ENCODE measurements at regions of chr6 and their contacts with region 1.

Region 1: DNA sequence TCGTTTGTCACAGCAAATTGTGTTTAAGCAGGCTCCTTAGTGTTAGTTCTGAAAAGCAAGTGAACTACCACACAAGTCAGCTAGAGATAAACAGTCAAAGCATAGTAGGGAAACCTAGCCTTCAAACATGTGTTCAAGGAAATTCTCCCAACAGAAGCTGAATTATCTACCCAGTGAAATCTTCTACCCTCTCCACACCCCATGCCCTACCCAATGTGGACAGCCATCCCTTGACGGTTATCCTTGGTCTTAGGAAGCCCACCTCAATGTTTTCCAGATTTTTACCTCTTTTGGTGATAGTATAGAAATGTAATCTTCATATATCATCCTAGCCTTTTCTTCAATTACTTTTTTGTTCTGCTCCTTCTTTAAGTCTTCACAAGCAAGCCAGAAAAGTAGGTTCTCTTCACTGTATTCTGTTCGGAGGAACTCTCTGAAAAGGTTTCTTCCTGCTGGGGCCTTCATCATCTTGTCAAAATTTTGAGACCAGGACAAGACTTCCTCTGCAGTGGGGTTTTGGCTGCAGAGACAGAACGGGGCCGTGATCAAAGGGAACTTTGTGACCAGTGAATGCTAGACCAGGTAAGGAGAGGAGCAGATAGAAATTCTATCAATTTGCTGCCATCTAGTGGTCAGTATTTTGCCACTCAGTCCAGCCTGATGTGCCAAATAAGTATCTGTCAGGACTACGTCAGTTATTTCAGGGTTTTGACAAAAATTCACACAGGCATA is 21.6 kb upstream of the MTRF1L start:
- DNase-seq: peak in 1 of 2 donors; percentile 36
- ATAC-seq: peak in 7 of 8 donors; percentile 69 to 93 (median 74)
- H3K4me3 ChIP-seq: no peak overlapping the region
- H3K27ac ChIP-seq: no peak overlapping the region
- H3K4me1 ChIP-seq: no peaks in the 10 kb centered on the region
- H3K27me3 ChIP-seq: no peaks in the 10 kb centered on the region
- CTCF ChIP-seq: peak; percentile 66 to 89 (median 80)

Region 2: GRCh38 chr6:152301764-152302568 is 722.2 kb before region 1 on chr6:
- intact Hi-C with region 1: no loop called
- DNase-seq: peak; percentile 88
- ATAC-seq: peak; percentile 95 to 99 (median 97)
- H3K4me3 ChIP-seq: peak overlapping the region; percentile 23 to 74 (median 61)
- H3K27ac ChIP-seq: peak overlapping the region; percentile 62 to 93 (median 82)
- H3K4me1 ChIP-seq: peaks cover 0 to 55% (median 23%) of the 10 kb centered on the region in 9 donors
- H3K27me3 ChIP-seq: no peaks in the 10 kb centered on the region
- CTCF ChIP-seq: peak; percentile 38 to 77 (median 70)

Region 3: DNA sequence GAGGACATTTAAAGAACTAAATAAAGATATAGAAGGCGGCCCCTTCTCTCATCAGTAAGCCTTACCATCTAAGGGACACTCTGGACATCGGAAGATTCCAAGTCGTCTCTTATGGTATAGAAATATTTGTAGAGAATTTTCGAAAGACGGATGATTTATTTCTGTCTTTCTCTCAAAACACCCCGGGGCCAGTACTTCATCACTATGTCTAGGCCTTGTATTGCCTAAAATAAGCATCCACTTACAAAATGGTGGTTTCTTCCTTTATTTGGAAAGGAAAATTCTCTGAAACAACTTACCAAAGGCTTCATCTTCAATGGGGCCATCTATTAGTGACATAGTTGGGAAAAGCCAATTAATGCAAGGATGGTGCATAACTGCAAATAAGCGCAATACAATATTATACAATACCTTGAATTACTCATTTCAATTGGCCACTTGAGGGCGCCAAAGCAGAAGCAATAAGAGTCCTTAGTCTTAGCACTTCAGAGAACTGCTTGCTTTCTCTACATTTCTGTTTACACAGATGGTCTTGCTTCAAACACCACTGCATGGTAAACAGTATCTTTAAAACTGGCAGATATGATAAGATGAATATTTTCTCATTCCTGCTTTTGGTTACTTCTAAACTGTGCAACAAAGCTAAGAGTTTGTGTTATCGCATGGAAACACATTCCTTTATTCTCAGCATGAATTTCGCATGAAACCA is 160.4 kb before region 1 on chr6:
- intact Hi-C with region 1: loop called (anchors 1 to 10 kb)
- DNase-seq: peak in 1 of 2 donors; percentile 73
- ATAC-seq: peak; percentile 61 to 84 (median 76)
- H3K4me3 ChIP-seq: no peak overlapping the region
- H3K27ac ChIP-seq: no peak overlapping the region
- H3K4me1 ChIP-seq: no peaks in the 10 kb centered on the region
- H3K27me3 ChIP-seq: peaks cover 0 to 5% (median 0%) of the 10 kb centered on the region in 7 donors
- CTCF ChIP-seq: peak; percentile 59 to 80 (median 76)

Region 4: GRCh38 chr6:152948150-152948768 is 75.9 kb before region 1 on chr6:
- intact Hi-C with region 1: loop called in 4 of 10 experiments (anchors 5 to 10 kb)
- DNase-seq: peak in 1 of 2 donors; percentile 7
- ATAC-seq: peak in 6 of 8 donors; percentile 52 to 75 (median 68)
- H3K4me3 ChIP-seq: peak overlapping the region in 2 of 10 donors; percentile 5 to 27
- H3K27ac ChIP-seq: no peak overlapping the region
- H3K4me1 ChIP-seq: peaks cover 0 to 11% (median 0%) of the 10 kb centered on the region in 9 donors
- H3K27me3 ChIP-seq: peaks cover 0 to 29% (median 3%) of the 10 kb centered on the region in 7 donors
- CTCF ChIP-seq: peak; percentile 36 to 78 (median 65)

Region 5: GRCh38 chr6:152969688-152970418 is 54.3 kb before region 1 on chr6:
- intact Hi-C with region 1: loop called in 2 of 10 experiments (anchors 10 kb)
- DNase-seq: no peak
- ATAC-seq: no peak
- H3K4me3 ChIP-seq: no peak overlapping the region
- H3K27ac ChIP-seq: no peak overlapping the region
- H3K4me1 ChIP-seq: peaks cover 0 to 13% (median 0%) of the 10 kb centered on the region in 9 donors
- H3K27me3 ChIP-seq: no peaks in the 10 kb centered on the region
- CTCF ChIP-seq: no peak

Region 6: DNA sequence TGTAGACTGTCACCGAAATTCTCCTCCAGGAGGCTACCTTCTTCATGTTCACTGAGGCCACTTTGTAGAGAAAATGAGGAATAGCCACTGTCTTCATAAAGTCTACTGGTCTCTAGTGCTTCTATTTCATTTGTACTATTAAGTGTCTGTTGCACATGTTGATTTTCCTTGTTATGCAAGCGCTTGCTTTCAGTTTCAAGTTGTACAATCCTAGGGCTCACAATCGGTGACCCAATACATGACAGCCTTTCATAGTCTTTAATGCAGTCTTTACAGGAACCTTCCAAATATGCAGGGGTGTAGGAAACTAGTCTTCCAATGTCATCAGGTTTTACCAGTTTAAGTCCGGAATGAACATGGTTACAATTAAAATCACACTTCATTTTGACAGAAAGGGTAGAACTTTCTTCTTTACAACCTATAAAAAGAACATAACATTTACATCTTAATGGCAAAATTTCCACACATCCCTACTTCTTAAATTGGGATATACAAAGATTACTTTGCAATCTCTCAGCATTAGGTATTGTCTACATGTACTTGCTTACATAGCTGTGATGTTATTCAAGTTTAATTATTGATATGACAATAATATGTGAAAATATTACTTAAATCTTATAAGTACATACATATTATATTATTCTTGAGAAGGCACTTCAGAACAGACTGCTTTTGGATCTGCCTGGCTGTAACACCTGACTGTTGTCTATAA is 48.8 kb before region 1 on chr6:
- intact Hi-C with region 1: loop called in 1 of 10 experiments (anchors 10 kb)
- DNase-seq: no peak
- ATAC-seq: no peak
- H3K4me3 ChIP-seq: no peak overlapping the region
- H3K27ac ChIP-seq: peak overlapping the region in 1 of 10 donors; percentile 59
- H3K4me1 ChIP-seq: peaks cover 0 to 54% (median 0%) of the 10 kb centered on the region in 9 donors
- H3K27me3 ChIP-seq: no peaks in the 10 kb centered on the region
- CTCF ChIP-seq: no peak